Right lobe of liver (tissue), 6 donors: ENCODE measurements at regions of chr1 and their contacts with region 1.

Region 1: DNA sequence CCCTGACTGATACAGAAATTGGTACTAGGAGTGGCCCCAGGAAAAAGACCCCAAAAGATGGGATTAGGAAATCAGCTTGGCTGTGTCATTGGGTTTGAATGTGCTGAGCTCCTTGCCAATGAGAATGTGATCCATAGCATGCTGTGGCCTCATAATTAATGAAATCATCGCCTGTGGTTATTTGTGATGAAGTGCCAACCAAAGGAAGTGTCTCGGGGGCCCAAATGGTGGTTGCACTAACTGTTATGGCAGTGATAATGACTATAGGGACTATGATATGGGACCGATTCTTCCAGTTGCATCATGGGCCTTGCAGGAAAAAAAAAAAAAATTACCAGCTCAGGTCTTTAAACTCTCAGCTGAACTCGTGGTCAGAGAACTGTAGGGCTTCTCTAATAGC is 15.4 kb upstream of the ZDHHC18 start:
- DNase-seq: no peak
- ATAC-seq: no peak
- H3K4me3 ChIP-seq: no peak overlapping the region
- H3K27ac ChIP-seq: no peak overlapping the region
- H3K4me1 ChIP-seq: peaks cover 0 to 33% (median 9%) of the 10 kb centered on the region in 4 donors
- H3K27me3 ChIP-seq: no peaks in the 10 kb centered on the region
- CTCF ChIP-seq: no peak
- POLR2A ChIP-seq: no peak

Region 2: GRCh38 chr1:26874896-26875295 is 63.8 kb after region 1 on chr1:
- intact Hi-C with region 1: loop called (anchors 10 kb)
- DNase-seq: no peak
- ATAC-seq: no peak
- H3K4me3 ChIP-seq: no peak overlapping the region
- H3K27ac ChIP-seq: no peak overlapping the region
- H3K4me1 ChIP-seq: peaks cover 0 to 7% (median 0%) of the 10 kb centered on the region in 4 donors
- H3K27me3 ChIP-seq: no peaks in the 10 kb centered on the region
- CTCF ChIP-seq: no peak
- POLR2A ChIP-seq: no peak